CD8-positive, alpha-beta memory T cell (primary cell): ENCODE measurements at regions of chr19 and their contacts with region 1.

Region 1: DNA sequence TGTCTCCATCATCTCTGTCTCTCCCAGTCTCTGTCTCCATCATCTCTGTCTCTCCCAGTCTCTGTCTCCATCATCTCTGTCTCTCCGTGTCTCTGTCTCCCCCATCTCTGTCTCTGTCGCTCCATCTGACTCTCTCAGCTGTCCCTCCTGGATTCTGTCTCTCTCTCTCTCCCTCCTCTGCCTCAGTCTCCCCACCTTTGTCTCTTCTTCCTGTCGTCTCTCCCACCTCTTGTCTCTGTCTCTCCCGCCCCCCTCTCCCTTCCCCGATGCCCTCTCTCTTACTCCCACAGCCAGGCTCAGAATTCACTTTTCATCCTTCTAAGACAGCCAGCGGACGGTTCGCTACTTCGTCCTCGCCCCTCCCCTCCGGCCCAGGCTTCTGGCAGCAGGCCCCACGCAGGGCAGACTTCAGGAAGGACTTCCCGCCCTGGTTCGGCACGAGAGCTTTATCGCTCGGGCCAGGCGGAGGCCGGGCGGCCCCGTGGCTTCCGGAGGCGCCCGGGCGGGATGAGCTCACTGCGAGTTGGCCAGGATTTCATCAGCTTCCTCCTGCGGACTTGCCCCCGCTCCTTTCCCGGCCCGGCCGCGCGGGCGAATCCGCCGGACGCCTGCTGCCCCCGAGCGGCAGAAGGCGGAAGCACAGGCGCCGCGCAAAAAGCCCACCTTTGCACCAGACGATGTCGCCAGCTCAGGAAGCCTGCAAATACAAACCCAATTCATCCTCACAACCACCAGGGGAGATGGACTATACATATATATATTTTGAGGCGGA is 12.4 kb upstream of the CCDC9 start:
- DNase-seq: peak; percentile 83 to 91 (median 88)
- H3K4me3 ChIP-seq: peak overlapping the region; percentile 64
- H3K4me3 Mint-ChIP-seq: peak overlapping the region; percentile 57 to 89 (median 77)
- H3K27ac ChIP-seq: peak overlapping the region; percentile 63
- H3K27ac Mint-ChIP-seq: peak overlapping the region in 7 of 8 donors; percentile 44 to 93 (median 92)
- H3K4me1 ChIP-seq: peaks cover 43% of the 10 kb centered on the region
- H3K4me1 Mint-ChIP-seq: peaks cover 9 to 29% (median 29%) of the 10 kb centered on the region in 3 donors
- H3K27me3 ChIP-seq: no peaks in the 10 kb centered on the region
- H3K27me3 Mint-ChIP-seq: peaks cover 0 to 1% of the 10 kb centered on the region in 2 donors

Region 2: DNA sequence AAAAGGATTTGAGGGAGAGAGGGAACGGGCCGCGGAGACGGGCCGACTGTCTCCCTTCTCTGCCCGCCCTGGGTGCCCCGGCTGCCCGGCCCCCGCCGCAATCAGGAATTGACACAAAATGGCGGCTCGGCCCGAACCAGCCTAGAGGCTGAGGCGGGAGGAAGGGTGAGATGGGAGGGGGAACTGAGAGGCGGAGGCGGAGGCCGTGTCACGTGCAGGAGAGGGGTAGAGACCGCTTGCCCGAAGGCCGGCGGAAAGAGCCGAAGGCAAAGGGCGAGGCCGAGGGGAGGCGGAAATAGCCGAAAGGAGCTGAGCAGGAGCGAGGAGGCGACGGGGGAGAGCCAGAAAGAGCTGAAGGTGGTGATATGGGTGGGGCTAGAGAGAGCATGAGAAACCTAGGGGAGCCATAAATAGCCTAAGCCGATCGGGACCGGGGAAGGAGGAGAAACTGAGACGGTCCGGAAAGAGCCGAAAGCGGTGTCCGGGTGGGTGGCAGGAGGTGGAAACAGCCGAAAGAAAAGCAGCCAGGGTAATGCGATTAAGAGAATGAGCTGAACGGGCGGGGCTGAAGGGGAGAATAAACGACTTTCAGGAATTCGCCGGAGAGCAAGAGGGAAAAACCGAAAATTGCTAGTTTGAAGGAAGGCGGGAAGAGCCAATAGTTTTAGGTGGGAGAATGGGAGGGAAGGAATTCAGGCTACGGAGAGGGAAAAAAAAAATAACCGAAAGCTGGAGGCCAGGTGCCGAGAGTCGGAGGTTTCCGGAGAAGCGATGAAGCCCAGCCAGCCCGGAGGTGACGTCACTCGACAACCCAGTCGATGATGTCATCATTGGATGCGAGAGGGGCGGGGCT is 130.7 kb before region 1 on chr19 and contains the start of gene ZC3H4:
- CTCF ChIA-PET with region 1: interaction called, 18 read pairs
- POLR2A ChIA-PET with region 1: interaction called, 19 read pairs
- DNase-seq: peak; percentile 99 to 100 (median 100)
- H3K4me3 ChIP-seq: peak within 1 kb of the TSS; percentile 84
- H3K4me3 Mint-ChIP-seq: peak within 1 kb of the TSS; percentile 95 to 100 (median 97)
- H3K27ac ChIP-seq: peak within 1 kb of the TSS; percentile 99
- H3K27ac Mint-ChIP-seq: peak within 1 kb of the TSS; percentile 99 to 100 (median 100)
- H3K4me1 ChIP-seq: peaks cover 30% of the 10 kb centered on the region
- H3K4me1 Mint-ChIP-seq: peaks cover 32 to 35% (median 34%) of the 10 kb centered on the region in 3 donors
- H3K27me3 ChIP-seq: no peaks in the 10 kb centered on the region
- H3K27me3 Mint-ChIP-seq: no peaks in the 10 kb centered on the region
- total RNA-seq, gene ZC3H4: 90.3 to 99.6 TPM

Region 3: DNA sequence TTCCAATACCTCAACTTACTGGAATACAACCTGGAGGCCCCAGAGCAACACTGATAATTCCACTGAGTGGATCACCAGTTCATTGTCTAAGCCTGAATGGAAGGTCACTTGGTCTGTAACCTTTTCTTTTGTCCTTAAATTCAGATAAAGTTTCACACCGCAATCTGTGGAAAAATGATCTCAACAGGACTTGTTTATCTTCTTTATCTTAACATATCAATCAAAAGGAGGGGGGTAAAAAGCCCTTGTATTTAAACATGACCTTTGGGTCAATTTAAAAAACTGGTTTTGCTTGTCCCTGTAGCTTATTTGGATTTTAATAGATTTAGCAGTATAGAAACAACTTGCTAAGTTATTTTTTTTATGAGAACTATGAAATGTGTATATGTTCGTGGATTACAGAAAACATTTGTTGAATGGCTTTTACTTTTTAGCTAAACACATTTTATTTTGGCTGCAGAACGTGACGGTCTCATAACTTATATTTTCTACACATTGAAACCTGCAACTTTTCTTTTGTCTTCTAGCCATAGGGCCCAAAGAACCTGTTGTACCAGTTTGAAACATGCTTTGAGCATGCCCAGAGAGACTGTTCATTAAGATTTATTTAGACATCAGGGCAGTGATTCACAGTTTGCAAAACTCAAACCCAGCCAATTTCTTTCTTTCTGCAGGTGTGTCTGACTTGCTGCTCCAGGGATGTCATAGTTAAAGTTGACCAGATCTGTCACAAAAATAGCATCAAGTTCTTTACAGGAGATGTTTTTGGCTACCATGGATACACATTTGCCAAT is 91.5 kb before region 1 on chr19:
- CTCF ChIA-PET with region 1: interaction called, 342 read pairs
- POLR2A ChIA-PET with region 1: interaction called, 29 read pairs
- DNase-seq: no peak
- H3K4me3 ChIP-seq: no peak overlapping the region
- H3K4me3 Mint-ChIP-seq: no peak overlapping the region
- H3K27ac ChIP-seq: no peak overlapping the region
- H3K27ac Mint-ChIP-seq: peak overlapping the region in 2 of 8 donors; percentile 58 to 69
- H3K4me1 ChIP-seq: peaks cover 39% of the 10 kb centered on the region
- H3K4me1 Mint-ChIP-seq: peaks cover 28 to 57% (median 51%) of the 10 kb centered on the region in 3 donors
- H3K27me3 ChIP-seq: no peaks in the 10 kb centered on the region
- H3K27me3 Mint-ChIP-seq: no peaks in the 10 kb centered on the region

Region 4: GRCh38 chr19:47176627-47177090 is 67.3 kb before region 1 on chr19:
- CTCF ChIA-PET with region 1: interaction called, 30 read pairs
- POLR2A ChIA-PET with region 1: interaction called, 5 read pairs
- DNase-seq: peak in 3 of 5 donors; percentile 54 to 79 (median 63)
- H3K4me3 ChIP-seq: peak overlapping the region; percentile 17
- H3K4me3 Mint-ChIP-seq: peak overlapping the region; percentile 10 to 86 (median 82)
- H3K27ac ChIP-seq: no peak overlapping the region
- H3K27ac Mint-ChIP-seq: peak overlapping the region; percentile 68 to 97 (median 92)
- H3K4me1 ChIP-seq: peaks cover 58% of the 10 kb centered on the region
- H3K4me1 Mint-ChIP-seq: peaks cover 44 to 71% (median 66%) of the 10 kb centered on the region in 3 donors
- H3K27me3 ChIP-seq: no peaks in the 10 kb centered on the region
- H3K27me3 Mint-ChIP-seq: no peaks in the 10 kb centered on the region

Region 5: GRCh38 chr19:47203254-47203653 is 40.7 kb before region 1 on chr19:
- CTCF ChIA-PET with region 1: interaction called, 334 read pairs
- POLR2A ChIA-PET with region 1: interaction called, 3 read pairs
- DNase-seq: no peak
- H3K4me3 ChIP-seq: no peak overlapping the region
- H3K4me3 Mint-ChIP-seq: no peak overlapping the region
- H3K27ac ChIP-seq: no peak overlapping the region
- H3K27ac Mint-ChIP-seq: peak overlapping the region in 2 of 8 donors; percentile 29 to 38
- H3K4me1 ChIP-seq: no peaks in the 10 kb centered on the region
- H3K4me1 Mint-ChIP-seq: peaks cover 3 to 12% (median 10%) of the 10 kb centered on the region in 3 donors
- H3K27me3 ChIP-seq: no peaks in the 10 kb centered on the region
- H3K27me3 Mint-ChIP-seq: no peaks in the 10 kb centered on the region

Region 6: GRCh38 chr19:47225746-47226425 is 18.1 kb before region 1 on chr19:
- CTCF ChIA-PET with region 1: interaction called, 334 read pairs
- POLR2A ChIA-PET with region 1: interaction called, 77 read pairs
- DNase-seq: peak; percentile 85 to 92 (median 86)
- H3K4me3 ChIP-seq: peak overlapping the region; percentile 74
- H3K4me3 Mint-ChIP-seq: peak overlapping the region; percentile 11 to 92 (median 62)
- H3K27ac ChIP-seq: peak overlapping the region; percentile 94
- H3K27ac Mint-ChIP-seq: peak overlapping the region; percentile 71 to 95 (median 90)
- H3K4me1 ChIP-seq: peaks cover 36% of the 10 kb centered on the region
- H3K4me1 Mint-ChIP-seq: peaks cover 6 to 20% (median 16%) of the 10 kb centered on the region in 3 donors
- H3K27me3 ChIP-seq: no peaks in the 10 kb centered on the region
- H3K27me3 Mint-ChIP-seq: no peaks in the 10 kb centered on the region

Region 7: GRCh38 chr19:47256688-47257443 is 12.9 kb after region 1 on chr19:
- CTCF ChIA-PET with region 1: interaction called, 24 read pairs
- POLR2A ChIA-PET with region 1: interaction called, 21 read pairs
- DNase-seq: peak; percentile 96 to 99 (median 98)
- H3K4me3 ChIP-seq: peak overlapping the region; percentile 61
- H3K4me3 Mint-ChIP-seq: peak overlapping the region; percentile 81 to 93 (median 90)
- H3K27ac ChIP-seq: peak overlapping the region; percentile 84
- H3K27ac Mint-ChIP-seq: peak overlapping the region; percentile 92 to 97 (median 96)
- H3K4me1 ChIP-seq: peaks cover 23% of the 10 kb centered on the region
- H3K4me1 Mint-ChIP-seq: peaks cover 34 to 47% (median 37%) of the 10 kb centered on the region in 3 donors
- H3K27me3 ChIP-seq: no peaks in the 10 kb centered on the region
- H3K27me3 Mint-ChIP-seq: peaks cover 0 to 1% of the 10 kb centered on the region in 2 donors

Region 8: DNA sequence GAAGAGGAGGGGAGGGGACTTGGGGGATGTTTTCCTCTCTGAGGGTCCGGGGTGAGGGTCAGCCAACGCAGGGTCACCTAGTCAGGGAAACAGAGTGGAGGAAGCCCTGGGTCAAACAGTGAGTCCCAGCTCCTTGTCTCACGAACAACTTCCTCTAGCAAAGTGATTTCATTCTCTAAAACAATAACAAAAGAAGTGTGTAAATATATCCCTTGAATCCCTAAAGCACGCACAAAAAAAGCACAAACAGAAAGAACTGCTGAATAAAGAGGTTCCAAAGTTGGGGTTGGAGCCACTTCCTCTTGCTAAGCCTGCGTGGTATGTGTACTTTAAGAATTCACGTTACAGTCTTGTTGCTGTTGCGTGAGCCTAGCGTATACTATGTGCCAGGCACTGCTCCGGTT is 86.5 kb after region 1 on chr19:
- CTCF ChIA-PET with region 1: no interaction called
- POLR2A ChIA-PET with region 1: no interaction called
- DNase-seq: no peak
- H3K4me3 ChIP-seq: no peak overlapping the region
- H3K4me3 Mint-ChIP-seq: no peak overlapping the region
- H3K27ac ChIP-seq: peak overlapping the region; percentile 24
- H3K27ac Mint-ChIP-seq: no peak overlapping the region
- H3K4me1 ChIP-seq: no peaks in the 10 kb centered on the region
- H3K4me1 Mint-ChIP-seq: peaks cover 0 to 3% (median 0%) of the 10 kb centered on the region in 3 donors
- H3K27me3 ChIP-seq: no peaks in the 10 kb centered on the region
- H3K27me3 Mint-ChIP-seq: peaks cover 9 to 11% of the 10 kb centered on the region in 2 donors